IMR-90 (cell line): ENCODE measurements at regions of chr19 and their contacts with region 1.

Region 1: DNA sequence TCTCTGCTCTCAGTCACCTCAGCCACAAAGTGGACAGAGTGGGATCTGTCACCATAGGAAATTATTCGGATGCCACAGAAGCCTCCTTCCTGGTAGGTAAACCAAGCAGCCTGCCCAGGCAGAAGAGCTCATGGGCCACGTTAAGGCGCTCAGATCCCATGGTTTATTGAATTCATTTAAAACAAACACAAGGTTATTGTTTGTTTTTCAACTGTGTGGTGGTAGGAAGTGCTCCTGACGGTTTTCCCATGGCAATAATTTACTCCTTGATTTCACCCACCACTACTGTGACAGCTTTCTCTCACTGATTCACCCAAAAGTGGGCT is 14.4 kb downstream of the BCAM start:
- DNase-seq: no peak
- ATAC-seq: no peak; the same call in 1 of the 2 replicates
- H3K4me3 ChIP-seq: no peak overlapping the region
- H3K27ac ChIP-seq: no peak overlapping the region
- H3K4me1 ChIP-seq: peaks cover 3% of the 10 kb centered on the region; the same call in 1 of the 2 replicates
- H3K27me3 ChIP-seq: peaks cover 10% of the 10 kb centered on the region
- CTCF ChIP-seq: no peak
- POLR2A ChIP-seq: no peak
- RAD21 ChIP-seq: no peak

Region 2: GRCh38 chr19:44732615-44733014 is 90.7 kb before region 1 on chr19:
- CTCF ChIA-PET with region 1: no interaction called
- POLR2A ChIA-PET with region 1: interaction called, 13 read pairs
- dilution Hi-C with region 1: no loop called
- in situ Hi-C with region 1: no loop called
- intact Hi-C with region 1: no loop called
- DNase-seq: no peak
- ATAC-seq: no peak
- H3K4me3 ChIP-seq: no peak overlapping the region
- H3K27ac ChIP-seq: no peak overlapping the region
- H3K4me1 ChIP-seq: peaks cover 6% of the 10 kb centered on the region
- H3K27me3 ChIP-seq: no peaks in the 10 kb centered on the region
- CTCF ChIP-seq: no peak
- POLR2A ChIP-seq: no peak
- RAD21 ChIP-seq: no peak

Region 3: DNA sequence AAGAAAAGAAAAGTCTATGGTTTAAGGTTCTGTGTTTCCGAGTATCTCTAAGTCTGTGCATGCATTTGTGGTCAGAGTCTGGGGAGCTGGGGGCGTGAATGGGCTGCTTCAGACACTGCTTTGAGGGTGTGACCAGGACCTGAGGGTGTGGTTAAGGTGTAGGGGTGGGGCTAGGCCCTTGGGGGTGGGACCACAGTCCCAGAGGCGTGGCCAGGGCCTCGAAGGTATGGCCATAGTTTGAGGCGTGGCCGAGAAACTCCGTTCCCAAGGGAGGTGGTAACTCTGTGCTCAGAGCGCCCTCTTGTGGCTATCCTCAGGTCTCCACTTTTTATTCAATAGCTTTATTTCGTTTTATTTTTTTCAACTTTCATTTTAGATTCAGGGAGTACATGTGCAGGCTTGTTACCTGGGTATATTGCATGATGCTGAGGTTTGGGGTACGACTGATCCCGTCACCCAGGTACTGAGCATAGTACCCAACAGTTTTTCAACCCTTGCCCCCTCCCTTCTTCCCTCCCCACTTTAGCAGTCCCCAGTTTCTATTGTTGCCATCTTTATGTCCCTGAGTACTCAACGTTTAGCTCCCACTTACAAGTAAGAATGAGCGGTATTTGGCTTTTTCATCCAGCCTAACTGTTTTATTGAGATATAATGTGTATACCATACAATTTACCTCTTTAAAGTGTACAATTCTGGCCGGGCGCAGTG is 52.6 kb before region 1 on chr19:
- CTCF ChIA-PET with region 1: no interaction called
- POLR2A ChIA-PET with region 1: no interaction called
- dilution Hi-C with region 1: no loop called
- in situ Hi-C with region 1: no loop called
- intact Hi-C with region 1: no loop called
- DNase-seq: peak; percentile 91
- ATAC-seq: peak; percentile 93
- H3K4me3 ChIP-seq: no peak overlapping the region
- H3K27ac ChIP-seq: peak overlapping the region; percentile 59
- H3K4me1 ChIP-seq: peaks cover 12% of the 10 kb centered on the region
- H3K27me3 ChIP-seq: no peaks in the 10 kb centered on the region
- CTCF ChIP-seq: peak; percentile 95
- POLR2A ChIP-seq: no peak
- RAD21 ChIP-seq: peak; percentile 95